Motor neuron (in vitro differentiated cells): ENCODE measurements at regions of chr6 and their contacts with region 1.

Region 1: DNA sequence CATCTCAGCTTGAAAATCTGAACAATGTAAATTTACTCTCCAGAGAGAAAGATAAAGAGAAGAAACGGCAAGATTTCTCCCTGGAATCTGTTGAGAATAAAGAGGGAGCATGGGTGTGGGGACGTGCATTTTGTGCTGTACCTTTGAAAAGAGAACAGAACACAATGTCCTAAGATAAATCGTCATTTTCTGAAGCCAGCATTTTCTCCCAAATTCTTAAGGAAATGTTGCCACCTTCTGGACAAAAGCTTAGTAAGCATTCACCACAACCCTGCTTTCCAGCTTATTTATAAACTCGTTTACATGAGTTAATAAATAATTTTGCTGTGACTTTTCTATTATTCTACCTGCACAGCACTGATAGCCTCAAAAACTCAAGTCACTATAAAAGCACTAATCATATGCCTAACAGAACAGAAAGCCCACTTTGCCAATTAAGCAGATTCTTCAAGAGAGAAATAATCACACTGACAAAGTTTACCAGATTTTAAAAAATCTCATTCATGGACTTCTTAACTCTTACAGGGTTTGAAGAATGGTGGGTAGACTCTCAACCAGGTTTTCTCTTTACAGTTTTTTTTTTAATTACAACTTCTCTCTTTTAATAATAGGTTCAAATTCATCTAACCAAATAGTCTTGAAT is 155.8 kb downstream of the MBOAT1 start:
- ATAC-seq: peak in 6 of 8 experiments; percentile 20 to 61 (median 44)
- H3K4me3 ChIP-seq: no peak overlapping the region
- H3K27ac ChIP-seq: no peak overlapping the region
- H3K4me1 ChIP-seq: peaks cover 5 to 15% of the 10 kb centered on the region in 2 donors

Region 2: DNA sequence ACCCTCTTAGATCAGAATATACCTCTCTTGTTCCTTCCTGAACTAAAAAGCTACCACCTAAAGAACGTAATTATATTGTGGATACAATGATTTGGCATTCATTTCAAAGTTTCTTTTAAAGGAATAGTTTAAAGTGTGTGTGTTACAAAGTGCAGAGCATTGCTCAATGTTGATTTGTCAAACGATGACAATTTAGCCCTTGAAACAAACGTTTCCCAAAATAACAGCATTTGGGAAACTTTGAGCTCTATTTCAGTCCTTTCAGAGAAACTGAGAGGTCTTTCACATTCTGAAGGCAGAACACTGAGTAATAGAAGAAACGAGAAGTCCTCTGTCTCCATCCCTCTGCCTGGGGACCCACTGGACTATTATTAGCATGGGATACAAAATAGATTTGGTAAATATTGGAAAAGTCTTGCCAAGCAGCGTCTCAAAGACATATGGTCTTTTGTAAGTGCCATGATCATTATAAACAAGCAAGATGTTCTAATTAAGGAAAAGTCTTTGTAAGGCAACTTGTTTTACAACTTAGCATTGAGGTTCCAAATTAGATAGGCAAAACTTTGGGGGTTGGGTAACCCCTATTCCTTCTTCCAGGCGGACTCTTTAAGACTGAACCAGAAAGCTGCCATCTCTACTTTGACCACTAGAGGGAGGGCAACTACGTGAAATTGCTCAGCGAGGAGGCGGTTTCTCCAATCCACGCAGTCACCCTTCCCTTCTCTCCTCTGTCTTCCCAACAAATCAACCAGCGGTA is 1460.5 kb before region 1 on chr6:
- in situ Hi-C with region 1: loop called in 6 of 9 experiments (anchors 25 kb)
- ATAC-seq: peak; percentile 73 to 90 (median 86)
- H3K4me3 ChIP-seq: no peak overlapping the region
- H3K27ac ChIP-seq: no peak overlapping the region
- H3K4me1 ChIP-seq: peaks cover 0 to 2% of the 10 kb centered on the region in 2 donors

Region 3: DNA sequence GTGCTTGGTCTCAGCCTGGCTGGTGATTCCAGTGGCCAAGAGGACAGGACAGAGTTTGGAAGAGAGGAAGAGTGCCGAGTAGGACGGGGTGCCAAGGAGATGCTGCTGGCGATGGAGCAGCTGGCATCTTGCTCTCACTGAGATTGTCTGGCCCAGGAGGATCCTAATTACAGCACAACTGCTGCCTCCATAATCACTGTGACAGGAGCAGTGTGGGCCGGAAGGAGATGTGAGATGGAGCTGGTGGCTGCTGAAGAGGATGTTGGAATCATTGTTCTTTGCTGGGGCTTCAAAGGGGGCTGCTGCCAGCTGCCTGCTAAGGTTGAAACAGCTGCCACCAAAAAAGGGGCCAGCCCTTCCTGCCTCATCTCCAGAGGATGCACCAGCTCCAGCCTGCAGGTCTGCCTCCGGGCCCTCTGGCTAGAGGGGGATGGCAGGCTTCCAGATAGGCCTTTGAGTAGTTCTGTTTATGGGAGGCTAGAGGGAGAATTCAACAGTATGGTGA is 1454.9 kb before region 1 on chr6:
- in situ Hi-C with region 1: loop called in 6 of 9 experiments (anchors 25 kb)
- ATAC-seq: no peak
- H3K4me3 ChIP-seq: no peak overlapping the region
- H3K27ac ChIP-seq: no peak overlapping the region
- H3K4me1 ChIP-seq: no peaks in the 10 kb centered on the region

Region 4: GRCh38 chr6:18742406-18742805 is 1314.1 kb before region 1 on chr6:
- in situ Hi-C with region 1: loop called in 1 of 9 experiments (anchors 25 kb)
- ATAC-seq: no peak
- H3K4me3 ChIP-seq: no peak overlapping the region
- H3K27ac ChIP-seq: no peak overlapping the region
- H3K4me1 ChIP-seq: no peaks in the 10 kb centered on the region

Region 5: GRCh38 chr6:18990059-18990978 is 1066.2 kb before region 1 on chr6:
- in situ Hi-C with region 1: loop called in 1 of 9 experiments (anchors 25 kb)
- ATAC-seq: peak in 6 of 8 experiments; percentile 58 to 100 (median 99)
- H3K4me3 ChIP-seq: no peak overlapping the region
- H3K27ac ChIP-seq: no peak overlapping the region
- H3K4me1 ChIP-seq: peaks cover 3 to 7% of the 10 kb centered on the region in 2 donors

Region 6: GRCh38 chr6:20302702-20303251 is 246.3 kb after region 1 on chr6:
- in situ Hi-C with region 1: no loop called
- ATAC-seq: no peak
- H3K4me3 ChIP-seq: no peak overlapping the region
- H3K27ac ChIP-seq: no peak overlapping the region
- H3K4me1 ChIP-seq: no peaks in the 10 kb centered on the region